ENCODE measurements at regions of chr1 and their contacts with region 1.

Region 1: DNA sequence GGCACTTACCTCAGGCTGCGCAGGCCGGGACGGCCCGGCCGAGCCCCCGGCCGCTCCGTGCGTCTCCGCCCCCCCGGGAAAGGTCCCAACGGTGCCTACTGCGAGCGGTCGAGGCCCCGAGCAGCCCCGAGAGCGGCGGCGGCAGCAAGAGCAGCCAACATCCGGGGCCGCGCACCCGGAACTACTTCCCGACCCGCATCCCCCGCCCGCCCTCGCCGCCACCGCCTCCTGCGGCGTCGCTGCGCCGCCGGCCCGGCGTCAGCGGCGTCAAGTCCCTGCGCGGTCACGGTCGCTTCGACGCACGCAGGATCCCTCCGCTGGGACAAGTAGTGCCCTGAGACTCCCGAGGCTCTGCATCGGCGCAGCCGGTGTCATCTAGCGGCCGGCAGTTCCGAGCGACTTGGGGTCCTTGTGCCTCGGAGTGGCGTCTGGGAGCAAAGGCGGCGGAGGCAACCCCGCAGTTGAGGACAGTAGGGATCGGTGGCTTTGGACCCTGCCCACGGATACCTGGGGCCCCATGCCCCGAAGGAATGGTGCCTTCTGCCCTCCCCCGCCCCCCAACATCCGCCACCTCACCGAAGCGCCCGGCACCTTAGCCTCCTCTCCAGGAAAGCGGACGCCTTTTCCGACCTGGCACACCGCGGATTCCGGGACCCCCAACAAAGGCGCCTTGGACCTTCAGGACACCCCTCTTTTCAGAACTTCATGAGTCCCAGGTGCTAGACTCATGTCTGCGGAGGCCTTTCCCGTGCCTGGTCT is at the start of gene FOXJ3:
- DNase-seq: peak; percentile 71
- ATAC-seq: peak; percentile 90
- H3K4me3 ChIP-seq: peak within 1 kb of the TSS; percentile 92
- H3K27ac ChIP-seq: peak within 1 kb of the TSS; percentile 85
- H3K4me1 ChIP-seq: no peaks in the 10 kb centered on the region
- H3K27me3 ChIP-seq: no peaks in the 10 kb centered on the region
- CTCF ChIP-seq: no peak
- EP300 ChIP-seq: 0 out of 4 replicates have a peak, but pooled peaks of 1 of the 2 experiments have one; percentile 5
- POLR2A ChIP-seq: peak; percentile 95
- RAD21 ChIP-seq: no peak
- polyA plus RNA-seq, gene FOXJ3: 9.5 to 11.9 TPM

Region 2: GRCh38 chr1:42186152-42186551 is 149.1 kb before region 1 on chr1:
- CTCF ChIA-PET with region 1: no interaction called
- POLR2A ChIA-PET with region 1: no interaction called
- RAD21 ChIA-PET with region 1: no interaction called
- SMC1A ChIA-PET with region 1: no interaction called
- in situ Hi-C with region 1: no loop called
- intact Hi-C with region 1: loop called (anchors 5 kb)
- DNase-seq: no peak
- ATAC-seq: no peak
- H3K4me3 ChIP-seq: no peak overlapping the region
- H3K27ac ChIP-seq: no peak overlapping the region
- H3K4me1 ChIP-seq: no peaks in the 10 kb centered on the region
- H3K27me3 ChIP-seq: no peaks in the 10 kb centered on the region
- CTCF ChIP-seq: no peak
- EP300 ChIP-seq: no peak
- POLR2A ChIP-seq: no peak
- RAD21 ChIP-seq: no peak

Region 3: GRCh38 chr1:42456010-42456758 is 121.0 kb after region 1 on chr1 and contains the starts of genes PPCS and ZMYND12:
- CTCF ChIA-PET with region 1: no interaction called
- POLR2A ChIA-PET with region 1: interaction called, 6 read pairs
- RAD21 ChIA-PET with region 1: no interaction called
- SMC1A ChIA-PET with region 1: interaction called, 3 read pairs
- in situ Hi-C with region 1: no loop called
- intact Hi-C with region 1: loop called (anchors 5 kb)
- DNase-seq: peak; percentile 83
- ATAC-seq: peak; percentile 95
- H3K4me3 ChIP-seq: peak within 1 kb of the TSS; percentile 92
- H3K27ac ChIP-seq: peak within 1 kb of the TSS; percentile 82
- H3K4me1 ChIP-seq: peaks cover 5% of the 10 kb centered on the region
- H3K27me3 ChIP-seq: no peaks in the 10 kb centered on the region
- CTCF ChIP-seq: 0 out of 6 replicates have a peak, but pooled peaks of 1 of the 3 experiments have one; percentile 5
- EP300 ChIP-seq: peak in 1 of 2 experiments; percentile 40; a peak in 1 of 4 replicates
- POLR2A ChIP-seq: peak; percentile 91
- RAD21 ChIP-seq: no peak
- polyA plus RNA-seq, gene PPCS: 57.1 to 63.2 TPM
- polyA plus RNA-seq, gene ZMYND12: 0.68 to 0.69 TPM

Region 4: DNA sequence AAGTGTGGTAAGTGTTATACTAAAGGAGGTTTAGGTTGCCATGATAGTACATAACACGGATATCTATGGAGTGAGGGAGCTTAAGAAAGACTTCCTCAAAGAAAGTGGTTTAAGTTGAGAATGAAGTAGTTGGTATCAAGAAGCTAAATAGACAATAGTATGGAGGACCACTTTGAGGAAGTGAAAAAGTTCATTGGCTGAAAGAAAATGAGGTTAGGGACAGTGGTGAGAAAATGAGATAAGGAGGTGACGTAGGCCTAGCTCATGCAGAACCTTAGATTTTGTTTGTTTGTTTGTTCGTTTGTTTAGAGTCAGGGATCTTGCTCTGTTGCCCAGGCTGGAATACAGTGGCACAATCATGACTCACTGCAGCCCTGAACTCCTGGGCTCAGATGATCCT is 250.8 kb after region 1 on chr1:
- CTCF ChIA-PET with region 1: no interaction called
- POLR2A ChIA-PET with region 1: no interaction called
- RAD21 ChIA-PET with region 1: no interaction called
- SMC1A ChIA-PET with region 1: no interaction called
- in situ Hi-C with region 1: no loop called
- intact Hi-C with region 1: loop called (anchors 5 kb)
- DNase-seq: no peak
- ATAC-seq: peak; percentile 83
- H3K4me3 ChIP-seq: no peak overlapping the region
- H3K27ac ChIP-seq: no peak overlapping the region
- H3K4me1 ChIP-seq: no peaks in the 10 kb centered on the region
- H3K27me3 ChIP-seq: no peaks in the 10 kb centered on the region
- CTCF ChIP-seq: no peak
- EP300 ChIP-seq: 0 out of 4 replicates have a peak, but pooled peaks of 1 of the 2 experiments have one; percentile 33
- POLR2A ChIP-seq: no peak
- RAD21 ChIP-seq: no peak

Region 5: DNA sequence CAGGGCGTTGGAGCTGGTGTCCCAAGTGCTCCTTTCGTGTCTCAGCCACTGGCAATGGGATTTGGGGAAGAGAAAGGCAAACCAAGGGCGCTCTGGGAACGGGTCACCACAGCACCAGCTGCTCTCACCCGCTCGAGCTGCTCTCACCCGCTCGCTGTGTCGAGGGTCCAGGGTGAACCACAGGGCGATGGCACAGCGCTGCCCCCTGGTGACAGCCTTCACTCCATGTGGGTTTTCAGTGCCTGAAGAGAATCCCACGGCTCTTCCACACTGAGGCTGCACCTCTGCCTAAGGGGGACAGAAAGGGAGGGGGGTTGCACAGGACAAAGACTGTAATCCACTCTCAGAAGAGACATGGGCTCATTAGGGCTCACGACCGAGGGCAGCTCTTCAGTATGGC is 411.9 kb after region 1 on chr1:
- CTCF ChIA-PET with region 1: no interaction called
- POLR2A ChIA-PET with region 1: no interaction called
- RAD21 ChIA-PET with region 1: no interaction called
- SMC1A ChIA-PET with region 1: no interaction called
- in situ Hi-C with region 1: no loop called
- intact Hi-C with region 1: loop called (anchors 5 kb)
- DNase-seq: no peak
- ATAC-seq: peak; percentile 74
- H3K4me3 ChIP-seq: no peak overlapping the region
- H3K27ac ChIP-seq: no peak overlapping the region
- H3K4me1 ChIP-seq: no peaks in the 10 kb centered on the region
- H3K27me3 ChIP-seq: no peaks in the 10 kb centered on the region
- CTCF ChIP-seq: peak; percentile 65 to 69 (median 67)
- EP300 ChIP-seq: no peak
- POLR2A ChIP-seq: no peak
- RAD21 ChIP-seq: peak; percentile 66